Activated naive CD4-positive, alpha-beta T cell treated with anti-CD3 and anti-CD28 coated beads for 36 hours (primary cell): ENCODE measurements at regions of chr20 and their contacts with region 1.

Region 1: GRCh38 chr20:49384437-49385088 is 97.9 kb downstream of the KCNB1 start:
- DNase-seq: peak; percentile 83
- H3K4me3 Mint-ChIP-seq: no peak overlapping the region
- H3K27ac Mint-ChIP-seq: no peak overlapping the region
- H3K4me1 Mint-ChIP-seq: no peaks in the 10 kb centered on the region
- H3K27me3 Mint-ChIP-seq: peaks cover 8% of the 10 kb centered on the region

Region 2: DNA sequence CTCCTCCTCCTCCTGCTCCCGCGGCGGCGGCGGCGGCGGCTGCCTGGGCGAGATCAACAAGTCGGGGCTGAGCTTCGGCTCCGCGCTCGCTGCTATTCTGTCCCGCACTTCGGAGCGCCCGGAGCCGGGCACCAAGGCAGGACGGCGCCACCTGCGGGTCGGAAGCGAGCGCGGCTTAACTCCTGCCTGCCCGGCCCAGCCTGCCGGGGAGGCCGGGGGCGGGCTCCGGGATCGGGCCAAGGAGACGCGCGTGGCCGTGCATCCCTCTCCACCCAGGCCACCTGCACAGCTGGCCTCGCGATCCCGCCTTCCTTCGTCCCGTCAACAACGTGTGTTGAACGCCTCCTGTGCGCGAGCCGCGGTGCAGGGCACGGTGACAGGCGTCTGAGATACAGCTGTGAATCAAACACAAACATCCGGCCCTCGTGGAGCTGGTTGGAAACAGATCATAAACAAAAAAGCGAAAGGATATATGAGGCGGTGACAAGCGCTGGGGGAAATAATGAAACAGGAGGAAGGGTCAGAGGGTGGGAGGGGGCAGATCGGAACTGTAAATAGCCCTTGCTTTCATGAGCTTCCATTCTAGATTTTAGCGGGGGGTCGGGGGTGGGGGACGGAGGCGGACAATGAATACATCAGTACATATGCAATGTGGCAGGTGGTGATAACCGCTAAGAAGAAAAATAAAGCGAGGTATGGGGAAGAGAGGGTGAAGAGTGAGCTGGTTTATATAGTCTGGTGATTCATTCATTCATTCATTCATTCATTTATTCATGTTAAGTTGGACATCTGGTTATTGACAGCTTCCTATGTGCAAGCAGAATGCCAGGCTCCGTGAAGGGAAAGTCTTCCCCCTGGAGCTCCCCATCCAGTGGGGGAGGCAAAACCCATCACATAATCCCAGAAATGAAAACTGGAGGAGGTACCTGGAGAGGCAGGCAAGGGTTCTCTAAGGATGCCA is 99.9 kb after region 1 on chr20:
- CTCF ChIA-PET with region 1: interaction called, 13 read pairs
- intact Hi-C with region 1: loop called (anchors 2 kb)
- DNase-seq: peak; percentile 77
- H3K4me3 Mint-ChIP-seq: peak overlapping the region; percentile 58
- H3K27ac Mint-ChIP-seq: no peak overlapping the region
- H3K4me1 Mint-ChIP-seq: peaks cover 4% of the 10 kb centered on the region
- H3K27me3 Mint-ChIP-seq: peaks cover 55% of the 10 kb centered on the region

Region 3: DNA sequence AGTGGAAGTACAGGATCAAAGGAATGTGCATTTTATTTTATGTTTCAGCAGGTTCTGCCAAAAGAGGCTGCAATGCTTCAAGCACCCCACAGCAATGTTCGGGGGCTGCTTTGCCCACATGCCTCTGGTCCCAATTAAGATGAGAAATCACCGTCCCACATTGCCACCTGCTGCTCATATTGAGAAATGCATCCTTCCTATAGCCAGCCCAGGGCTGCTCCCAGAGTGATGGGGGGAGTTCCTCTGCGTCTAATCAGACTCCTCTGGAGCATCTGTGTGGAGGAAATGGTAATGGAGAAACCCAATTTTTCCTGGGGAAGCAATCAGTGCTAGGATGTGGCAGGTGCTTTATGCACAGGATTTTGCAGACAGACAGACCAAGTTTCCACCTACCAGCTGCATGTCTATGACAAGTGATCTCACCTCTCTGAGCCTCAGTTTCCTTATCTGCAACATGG is 149.7 kb after region 1 on chr20:
- CTCF ChIA-PET with region 1: interaction called, 3 read pairs
- intact Hi-C with region 1: loop called (anchors 2 kb)
- DNase-seq: peak; percentile 77
- H3K4me3 Mint-ChIP-seq: no peak overlapping the region
- H3K27ac Mint-ChIP-seq: no peak overlapping the region
- H3K4me1 Mint-ChIP-seq: peaks cover 16% of the 10 kb centered on the region
- H3K27me3 Mint-ChIP-seq: peaks cover 13% of the 10 kb centered on the region

Region 4: DNA sequence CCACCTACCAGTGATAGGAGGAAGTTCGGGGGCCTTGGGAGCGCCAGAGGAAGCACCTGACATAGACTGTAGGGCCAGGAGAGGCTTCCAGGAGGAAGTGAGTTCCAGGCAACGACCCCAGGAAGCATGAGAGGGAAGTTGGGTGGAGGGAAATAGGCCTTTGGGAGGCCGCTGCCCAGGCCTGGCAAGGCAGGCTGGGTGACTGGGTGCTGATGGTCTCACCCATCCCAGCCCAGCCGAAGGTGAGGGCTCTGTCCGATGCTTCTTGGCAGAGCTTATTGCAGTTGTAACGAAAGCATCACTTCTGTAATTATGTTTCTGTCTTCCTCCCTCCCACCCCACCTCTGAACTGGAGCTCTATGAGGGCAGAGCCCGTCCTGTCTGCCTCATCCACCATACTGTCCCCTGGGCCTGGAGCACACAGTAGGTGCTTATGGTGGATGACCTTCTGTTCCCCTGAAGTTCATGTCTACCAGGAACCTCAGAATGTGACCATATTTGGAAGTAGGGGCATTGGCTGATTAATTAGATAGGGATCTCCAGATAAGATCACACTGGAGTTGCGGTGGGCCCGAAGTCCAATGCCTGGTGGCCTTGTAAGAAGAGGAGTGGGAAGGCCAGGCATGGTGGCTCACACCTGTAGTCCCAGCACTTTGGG is 674.3 kb after region 1 on chr20:
- CTCF ChIA-PET with region 1: no interaction called
- intact Hi-C with region 1: no loop called
- DNase-seq: no peak
- H3K4me3 Mint-ChIP-seq: no peak overlapping the region
- H3K27ac Mint-ChIP-seq: no peak overlapping the region
- H3K4me1 Mint-ChIP-seq: no peaks in the 10 kb centered on the region
- H3K27me3 Mint-ChIP-seq: peaks cover under 1% of the 10 kb centered on the region